ENCODE measurements at regions of chr6 and their contacts with region 1.

Region 1: GRCh38 chr6:35213824-35214756 is at the start of gene SCUBE3:
- DNase-seq: no peak
- total RNA-seq, gene SCUBE3: 5.2 TPM

Region 2: GRCh38 chr6:34953061-34954025 is 260.7 kb before region 1 on chr6:
- intact Hi-C with region 1: no loop called
- DNase-seq: no peak

Region 3: DNA sequence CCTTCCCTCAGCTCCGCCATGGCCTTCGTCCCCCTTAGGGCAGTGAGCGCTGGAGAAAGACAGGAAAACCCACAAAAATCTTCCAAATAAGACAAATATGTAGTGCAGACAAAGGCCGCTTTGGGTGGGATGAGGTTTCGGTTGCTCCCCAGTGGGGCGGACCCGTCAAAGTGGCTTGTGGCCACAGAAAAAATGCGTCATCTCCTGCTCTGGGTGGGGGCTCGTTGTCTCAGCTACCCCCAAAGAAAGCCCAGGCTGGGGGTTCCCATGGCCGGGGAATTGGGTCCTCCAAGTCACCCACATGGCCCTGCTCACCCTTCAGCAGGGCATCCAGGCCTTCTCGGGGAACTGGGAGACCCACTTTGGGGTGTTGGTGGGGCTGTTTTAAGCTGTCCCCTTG is 22.2 kb before region 1 on chr6:
- intact Hi-C with region 1: loop called (anchors 1 kb)
- DNase-seq: peak; percentile 62